ENCODE measurements at regions of chr5 and their contacts with region 1.

Region 1: DNA sequence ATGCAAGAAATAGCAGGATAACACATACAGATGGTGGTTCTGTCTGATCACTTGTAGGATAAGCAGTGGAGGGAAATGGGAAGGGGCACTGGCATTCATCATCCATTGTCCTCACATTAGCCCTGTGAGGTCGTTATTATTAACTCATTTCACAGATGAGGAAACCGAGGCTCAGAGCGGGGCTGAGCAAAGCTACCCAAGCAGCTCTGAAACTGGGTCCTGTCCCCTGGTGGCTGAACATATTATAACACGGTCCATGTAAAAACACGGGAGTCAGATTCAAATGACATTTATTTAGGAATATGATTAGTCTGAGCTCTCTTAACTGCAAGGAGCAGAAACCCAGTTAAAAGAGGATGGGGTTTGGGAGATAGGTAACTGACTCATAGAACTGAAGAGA is 43.1 kb downstream of the HRH2 start:
- DNase-seq: peak; percentile 22
- H3K27ac ChIP-seq: no peak overlapping the region
- CTCF ChIP-seq: peak; percentile 47

Region 2: GRCh38 chr5:175682649-175683048 is 18.3 kb before region 1 on chr5:
- CTCF ChIA-PET with region 1: interaction called, 18 read pairs
- POLR2A ChIA-PET with region 1: no interaction called
- DNase-seq: no peak
- H3K27ac ChIP-seq: no peak overlapping the region
- CTCF ChIP-seq: no peak

Measured in RWPE1 (cell line).